ENCODE measurements at regions of chr1 and their contacts with region 1.

Region 1: DNA sequence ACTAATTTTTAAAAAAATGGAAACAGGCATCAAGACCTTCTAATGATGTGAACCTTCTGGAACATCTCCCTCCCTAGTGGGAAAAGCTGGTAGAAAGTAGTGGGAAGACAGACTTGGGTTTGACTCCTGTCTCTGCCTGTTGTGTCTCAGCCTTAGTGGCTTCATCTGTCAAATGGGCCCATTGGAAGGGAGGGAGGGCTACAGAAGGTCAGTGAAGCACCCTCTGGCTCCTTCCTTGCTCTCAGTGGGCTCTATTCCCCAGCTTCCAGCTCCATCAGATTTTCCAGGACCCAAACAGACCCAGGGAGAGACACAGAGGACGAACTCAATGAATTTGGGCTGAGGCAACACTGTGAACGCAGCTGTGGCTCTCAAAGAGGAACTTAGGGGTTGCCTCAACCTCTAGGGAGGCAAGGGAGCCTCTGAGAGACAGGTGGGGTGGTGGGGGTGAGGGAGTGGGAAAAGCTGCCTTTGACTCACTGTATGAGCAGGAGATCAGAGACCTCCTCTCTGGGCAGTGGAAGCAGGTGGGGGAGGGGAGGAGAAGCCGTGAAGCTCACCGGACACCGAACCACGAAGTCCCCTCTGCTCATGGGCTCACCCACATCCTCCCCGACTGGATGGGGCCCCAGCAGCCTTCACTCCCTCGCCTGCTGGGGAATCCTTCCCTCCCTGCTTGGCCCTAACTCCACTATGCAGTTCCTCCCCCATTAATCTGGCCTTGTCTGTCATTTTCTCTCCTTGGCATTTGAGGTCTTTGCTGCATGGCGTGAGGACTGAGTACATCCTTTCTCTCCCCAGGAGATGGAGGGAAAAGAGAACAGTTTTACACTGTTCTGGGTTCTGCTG is 4.4 kb downstream of the CNR2 start:
- DNase-seq: peak; percentile 98
- H3K4me3 ChIP-seq: peak overlapping the region; percentile 76
- H3K27ac ChIP-seq: peak overlapping the region; percentile 95
- H3K4me1 ChIP-seq: peaks cover 92% of the 10 kb centered on the region
- CTCF ChIP-seq: no peak

Region 2: DNA sequence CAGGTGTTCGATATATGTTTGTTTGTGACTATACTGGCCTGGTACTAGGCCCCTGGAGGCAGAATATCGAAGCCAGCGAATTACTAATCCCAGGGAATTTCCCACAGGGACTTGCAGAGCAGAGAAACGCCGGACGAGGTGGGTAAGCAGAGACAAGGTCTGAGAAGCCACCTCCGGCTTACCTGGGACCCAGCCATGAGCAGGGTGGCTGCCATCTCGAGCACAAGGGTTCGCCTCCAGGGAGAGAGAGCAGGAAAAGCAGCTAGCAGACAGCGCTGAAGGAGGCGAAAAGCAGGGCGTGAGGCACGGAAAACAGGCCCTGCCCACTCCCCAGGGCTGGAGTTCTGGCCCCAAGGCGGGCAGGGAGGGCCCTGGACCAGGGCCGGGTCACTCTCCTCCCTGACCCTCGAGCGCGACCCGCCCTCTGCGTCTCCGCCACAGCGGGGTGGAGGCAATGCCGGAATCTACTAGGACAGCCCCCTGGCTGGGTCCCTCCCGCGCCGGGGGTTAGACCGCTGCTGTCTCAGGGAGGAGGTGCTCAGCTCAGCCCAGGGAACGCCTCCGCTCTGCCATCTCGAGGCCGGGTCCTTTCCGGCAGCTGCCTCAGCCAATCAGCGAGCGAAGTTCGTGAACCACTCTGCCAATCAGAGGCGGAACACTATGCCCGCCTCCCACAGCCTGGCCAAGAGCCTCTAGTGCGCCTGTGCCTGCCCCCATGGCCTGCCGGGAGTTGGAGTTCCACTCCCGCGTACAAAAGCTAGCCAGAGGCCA is 540.7 kb before region 1 on chr1:
- CTCF ChIA-PET with region 1: no interaction called
- POLR2A ChIA-PET with region 1: no interaction called
- intact Hi-C with region 1: loop called (anchors 10 kb)
- DNase-seq: peak; percentile 99
- H3K4me3 ChIP-seq: peak overlapping the region; percentile 77
- H3K27ac ChIP-seq: peak overlapping the region; percentile 76
- H3K4me1 ChIP-seq: peaks cover 28% of the 10 kb centered on the region
- CTCF ChIP-seq: no peak

Region 3: DNA sequence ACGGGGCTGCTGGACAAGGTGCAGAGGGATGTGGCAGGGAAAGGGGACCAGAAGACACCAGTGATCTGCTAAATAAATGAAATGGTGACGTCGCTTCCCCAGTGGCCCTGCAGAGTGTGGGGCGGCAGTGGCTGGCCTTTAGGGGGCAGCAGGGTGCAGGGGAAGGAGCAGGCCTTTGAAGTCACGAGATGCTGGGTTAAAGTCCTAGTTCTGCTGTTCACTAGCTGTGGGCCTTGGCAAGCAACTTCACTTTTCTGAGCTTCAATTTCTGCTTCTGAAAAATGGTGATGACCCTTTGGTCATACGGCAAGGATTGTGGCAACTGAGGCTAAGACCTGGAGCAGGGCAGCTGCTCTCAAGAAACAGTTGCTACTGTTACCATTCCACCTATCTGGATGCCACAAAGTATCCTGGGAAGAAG is 99.0 kb before region 1 on chr1:
- CTCF ChIA-PET with region 1: interaction called, 20 read pairs
- POLR2A ChIA-PET with region 1: interaction called, 4 read pairs
- intact Hi-C with region 1: no loop called
- DNase-seq: peak; percentile 86
- H3K4me3 ChIP-seq: no peak overlapping the region
- H3K27ac ChIP-seq: peak overlapping the region; percentile 25
- H3K4me1 ChIP-seq: peaks cover 41% of the 10 kb centered on the region
- CTCF ChIP-seq: peak; percentile 89

Region 4: DNA sequence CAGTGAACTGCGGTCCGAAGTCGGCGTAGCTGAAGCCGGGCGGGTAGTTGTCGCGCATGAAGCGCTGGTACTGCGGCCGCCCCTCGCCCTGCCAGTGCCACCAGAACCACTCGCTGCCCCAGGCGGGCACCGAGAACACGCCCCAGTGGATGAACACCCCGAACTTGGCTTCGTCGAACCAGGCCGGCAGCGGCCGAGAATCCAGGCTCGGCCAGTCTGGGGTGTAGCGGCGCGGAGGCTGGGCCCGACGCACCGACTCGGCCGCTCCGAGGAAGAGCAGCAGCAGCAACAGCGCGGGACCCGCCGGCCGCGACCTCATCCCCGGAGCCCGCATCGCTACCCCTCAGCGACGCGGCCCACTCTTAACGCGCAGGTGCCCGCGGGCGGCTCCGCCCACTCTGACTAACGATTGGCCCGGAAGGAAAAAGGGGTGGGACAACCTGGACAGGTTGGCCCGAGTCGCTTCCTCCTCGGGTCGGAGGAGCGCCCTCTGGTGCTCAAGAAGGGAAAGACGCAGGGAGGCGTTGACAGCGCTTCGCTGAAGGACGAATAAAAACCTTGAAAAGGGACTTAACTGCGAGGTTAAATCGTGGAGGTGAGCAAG is 40.7 kb before region 1 on chr1 and contains the start of gene FUCA1:
- CTCF ChIA-PET with region 1: no interaction called
- POLR2A ChIA-PET with region 1: no interaction called
- intact Hi-C with region 1: loop called (anchors 1 kb)
- DNase-seq: peak; percentile 97
- H3K4me3 ChIP-seq: peak within 1 kb of the TSS; percentile 74
- H3K27ac ChIP-seq: peak within 1 kb of the TSS; percentile 21
- H3K4me1 ChIP-seq: peaks cover 25% of the 10 kb centered on the region
- CTCF ChIP-seq: peak; percentile 82
- total RNA-seq, gene FUCA1: 9.1 and 9.3 TPM in 2 replicates

Region 5: DNA sequence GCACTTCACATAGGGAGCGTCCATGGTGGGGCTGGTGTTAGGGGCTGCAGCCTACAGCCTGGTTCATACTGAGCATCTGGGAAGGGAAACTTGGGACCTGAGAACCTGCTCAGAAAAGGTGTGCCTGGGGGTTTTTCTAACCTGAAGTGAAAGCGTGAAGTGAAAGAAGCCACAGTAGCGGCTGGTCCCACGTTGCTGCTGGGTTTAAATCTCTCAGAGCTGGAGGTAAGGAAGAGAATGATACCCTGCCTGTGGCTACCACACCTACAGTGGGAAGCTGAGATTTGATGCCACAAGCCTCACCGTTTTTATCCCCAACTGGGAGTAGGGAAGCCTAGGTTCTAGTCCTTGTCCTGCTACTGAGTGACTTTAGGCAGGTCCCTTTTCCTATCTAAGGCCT is 19.6 kb before region 1 on chr1:
- CTCF ChIA-PET with region 1: no interaction called
- POLR2A ChIA-PET with region 1: interaction called, 9 read pairs
- intact Hi-C with region 1: loop called (anchors 2 kb)
- DNase-seq: peak; percentile 54
- H3K4me3 ChIP-seq: peak overlapping the region; percentile 18
- H3K27ac ChIP-seq: peak overlapping the region; percentile 67
- H3K4me1 ChIP-seq: peaks cover 37% of the 10 kb centered on the region
- CTCF ChIP-seq: no peak

Region 6: GRCh38 chr1:23897083-23897482 is 11.6 kb before region 1 on chr1:
- CTCF ChIA-PET with region 1: no interaction called
- POLR2A ChIA-PET with region 1: interaction called, 27 read pairs
- intact Hi-C with region 1: no loop called
- DNase-seq: no peak
- H3K4me3 ChIP-seq: no peak overlapping the region
- H3K27ac ChIP-seq: peak overlapping the region; percentile 39
- H3K4me1 ChIP-seq: peaks cover 30% of the 10 kb centered on the region
- CTCF ChIP-seq: no peak

Region 7: DNA sequence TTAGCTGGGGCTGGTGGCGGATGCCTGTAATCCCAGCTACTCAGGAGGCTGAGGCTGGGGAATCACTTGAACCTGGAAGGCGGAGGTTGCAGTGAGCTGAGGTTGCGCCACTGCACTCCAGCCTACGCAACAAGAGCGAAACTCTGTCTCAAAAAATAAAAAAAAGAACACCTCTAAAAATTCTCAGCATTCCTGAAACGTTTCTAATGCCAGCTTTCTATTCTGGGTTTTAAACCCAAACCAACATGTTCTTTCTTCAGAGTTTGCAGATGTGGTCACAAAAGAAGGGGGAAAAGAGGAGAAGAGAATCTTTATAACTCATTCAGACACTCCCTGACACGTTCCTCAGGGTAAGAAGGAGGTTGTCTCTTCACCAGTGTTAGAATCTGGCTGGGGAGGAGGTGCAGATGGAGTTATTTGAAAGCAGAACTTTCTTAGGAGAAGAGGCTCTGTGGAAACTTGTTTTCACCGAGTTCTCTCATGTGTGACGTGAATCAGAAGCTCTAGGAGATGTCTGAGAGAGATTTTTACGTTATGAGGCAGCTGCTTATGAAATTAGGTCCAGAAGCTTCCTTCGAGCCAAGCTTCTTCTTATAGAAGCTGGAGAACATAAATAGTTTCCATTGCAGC is 22.3 kb after region 1 on chr1:
- CTCF ChIA-PET with region 1: interaction called, 4 read pairs
- POLR2A ChIA-PET with region 1: interaction called, 35 read pairs
- intact Hi-C with region 1: no loop called
- DNase-seq: peak; percentile 88
- H3K4me3 ChIP-seq: peak overlapping the region; percentile 62
- H3K27ac ChIP-seq: peak overlapping the region; percentile 93
- H3K4me1 ChIP-seq: peaks cover 75% of the 10 kb centered on the region
- CTCF ChIP-seq: no peak

Region 8: DNA sequence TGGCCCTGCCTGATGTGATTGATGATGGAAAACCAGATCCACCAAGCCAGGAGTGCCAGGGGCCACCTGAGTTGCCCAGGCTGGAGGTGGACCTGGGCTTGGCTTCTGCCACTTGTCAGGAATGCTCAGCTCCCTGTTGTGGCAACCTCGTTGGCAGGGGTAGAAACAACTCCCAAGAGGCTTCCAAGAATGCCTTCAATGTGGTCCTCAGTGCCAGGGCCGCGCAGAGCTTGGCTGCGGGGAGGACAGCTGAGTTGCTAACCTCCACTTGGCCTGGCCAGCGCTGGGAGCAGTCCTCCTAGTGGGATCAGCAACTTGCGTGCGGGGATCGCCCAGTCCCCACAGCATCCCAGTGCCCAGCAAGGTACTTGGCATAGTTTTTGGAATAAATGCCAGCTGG is 194.2 kb after region 1 on chr1:
- CTCF ChIA-PET with region 1: no interaction called
- POLR2A ChIA-PET with region 1: no interaction called
- intact Hi-C with region 1: no loop called
- DNase-seq: no peak
- H3K4me3 ChIP-seq: no peak overlapping the region
- H3K27ac ChIP-seq: no peak overlapping the region
- H3K4me1 ChIP-seq: no peaks in the 10 kb centered on the region
- CTCF ChIP-seq: no peak